ENCODE measurements at regions of chr2 and their contacts with region 1.

Region 1: DNA sequence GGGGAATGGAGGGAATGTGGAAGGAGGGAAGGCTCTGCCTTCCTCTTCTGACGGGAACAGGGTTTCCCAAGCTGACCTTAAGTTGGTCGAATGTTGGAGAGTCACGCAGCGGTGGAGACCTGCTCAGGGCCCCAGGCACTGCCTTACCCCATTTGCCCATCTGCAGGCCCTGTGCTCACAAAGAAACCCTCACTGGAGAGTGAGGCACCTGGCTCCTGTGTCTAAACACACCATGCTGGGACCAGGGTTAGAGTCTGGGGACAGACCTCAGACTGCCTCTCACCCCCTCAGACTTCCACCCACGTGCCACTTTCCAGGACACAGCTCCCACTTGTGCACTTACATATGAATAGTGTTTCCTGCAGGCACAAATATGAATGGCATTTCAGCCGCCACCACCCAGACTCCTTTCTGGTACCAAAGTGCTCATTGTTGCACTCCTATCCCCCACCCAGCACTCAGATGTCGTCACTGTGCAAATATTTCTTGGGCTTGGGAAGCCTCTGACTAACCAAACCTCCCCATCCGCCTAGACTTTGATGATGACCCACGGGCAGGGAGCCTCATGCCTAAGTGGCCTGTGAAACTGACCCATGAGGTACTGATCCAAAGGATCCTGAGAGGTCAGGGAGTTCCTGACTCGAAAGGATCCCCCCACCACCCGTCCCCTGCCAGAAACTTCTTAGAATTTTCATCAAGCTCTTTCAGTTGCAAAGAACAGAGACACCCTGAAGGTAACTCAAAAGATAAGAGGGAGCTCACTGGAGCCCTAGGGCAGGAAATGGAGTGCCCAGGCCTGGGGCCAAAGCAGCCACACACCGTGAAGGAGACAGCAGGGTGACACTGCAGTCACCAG is 78.3 kb downstream of the STPG4 start:
- DNase-seq: peak; percentile 92 to 99
- H3K4me3 ChIP-seq: peak overlapping the region; percentile 7; the same call in 1 of the 2 replicates
- H3K27ac ChIP-seq: peak overlapping the region; percentile 94
- H3K4me1 ChIP-seq: peaks cover 64% of the 10 kb centered on the region
- H3K27me3 ChIP-seq: no peaks in the 10 kb centered on the region
- CTCF ChIP-seq: no peak

Region 2: DNA sequence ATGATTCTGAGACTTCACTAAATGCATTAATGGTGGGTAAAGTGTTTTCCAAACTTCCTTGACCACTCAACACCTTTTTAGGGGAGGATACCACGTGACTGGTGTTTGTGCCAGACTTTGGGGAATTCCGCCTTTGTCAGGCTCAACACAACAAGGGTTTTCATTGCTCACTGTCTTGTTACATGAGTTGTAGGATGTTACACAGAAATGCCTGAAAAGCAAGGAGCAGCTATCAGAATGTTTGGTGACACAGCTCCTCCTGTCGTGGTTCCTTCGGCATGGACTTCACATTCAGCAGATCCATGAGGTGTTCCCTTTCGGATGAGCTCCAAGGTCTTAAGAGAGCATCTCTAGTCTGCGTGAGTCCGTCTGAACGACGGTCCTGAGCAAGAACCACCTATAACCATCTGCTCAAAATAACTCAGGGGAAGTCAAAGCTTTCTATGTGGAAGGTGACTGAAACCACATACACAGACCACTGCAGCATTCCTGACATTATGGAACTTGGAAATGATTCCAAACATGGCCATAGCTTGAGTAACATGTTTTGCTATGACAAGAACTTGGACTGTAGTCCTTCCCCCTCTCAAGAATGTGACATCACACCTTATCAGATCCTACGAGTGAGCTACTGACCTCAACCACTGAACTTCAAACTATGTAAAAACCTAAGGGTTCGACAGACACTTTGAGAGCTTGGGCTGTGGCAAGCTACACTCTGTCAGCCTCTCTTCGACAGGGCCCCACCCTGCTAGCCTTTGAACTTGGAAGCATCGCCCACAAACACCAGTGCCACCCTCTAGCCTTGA is 218.7 kb before region 1 on chr2:
- CTCF ChIA-PET with region 1: no interaction called
- POLR2A ChIA-PET with region 1: interaction called, 10 read pairs
- intact Hi-C with region 1: no loop called
- DNase-seq: peak; percentile 41 to 62
- H3K4me3 ChIP-seq: no peak overlapping the region
- H3K27ac ChIP-seq: peak overlapping the region; percentile 91
- H3K4me1 ChIP-seq: peaks cover 59% of the 10 kb centered on the region
- H3K27me3 ChIP-seq: no peaks in the 10 kb centered on the region
- CTCF ChIP-seq: no peak

Region 3: GRCh38 chr2:47043142-47043890 is 33.5 kb before region 1 on chr2:
- CTCF ChIA-PET with region 1: interaction called, 7 read pairs
- POLR2A ChIA-PET with region 1: interaction called, 10 read pairs
- intact Hi-C with region 1: loop called (anchors 1 kb)
- DNase-seq: peak; percentile 91 to 99
- H3K4me3 ChIP-seq: peak overlapping the region; percentile 45
- H3K27ac ChIP-seq: peak overlapping the region; percentile 89
- H3K4me1 ChIP-seq: peaks cover 65% of the 10 kb centered on the region
- H3K27me3 ChIP-seq: no peaks in the 10 kb centered on the region
- CTCF ChIP-seq: 0 out of 2 replicates have a peak, but pooled peaks have one; percentile 24

Region 4: DNA sequence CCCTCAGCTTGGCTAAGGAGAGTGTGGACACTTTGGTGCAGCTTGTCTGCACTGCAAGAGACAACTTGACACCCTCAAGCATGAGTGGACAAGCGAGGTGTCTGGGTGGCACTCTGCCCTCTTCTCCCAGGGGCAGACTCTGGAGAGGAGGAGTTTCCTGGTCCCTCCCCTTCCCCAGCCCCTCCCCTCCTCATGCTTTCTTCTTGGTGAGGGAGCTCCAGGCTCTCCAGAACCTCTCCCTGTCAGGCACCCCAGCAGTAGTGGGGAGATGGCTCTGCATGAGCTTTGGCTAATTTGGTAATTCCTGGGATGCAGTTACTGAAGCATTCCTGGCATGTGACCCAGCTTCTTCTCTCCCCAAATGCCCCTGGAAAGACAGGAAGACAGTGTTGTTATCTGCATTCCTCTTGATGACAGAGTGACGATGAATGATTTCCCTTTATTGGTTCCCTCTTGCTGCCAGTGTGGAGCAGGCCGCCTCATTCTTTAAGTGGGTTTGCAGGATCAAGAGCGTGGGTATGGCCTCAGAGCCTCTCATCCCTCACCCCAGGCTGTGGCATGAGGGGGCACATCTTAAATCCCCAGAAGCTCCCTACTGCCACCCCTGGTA is 10.9 kb before region 1 on chr2:
- CTCF ChIA-PET with region 1: interaction called, 14 read pairs
- POLR2A ChIA-PET with region 1: interaction called, 8 read pairs
- intact Hi-C with region 1: no loop called
- DNase-seq: peak; percentile 65 to 78
- H3K4me3 ChIP-seq: no peak overlapping the region
- H3K27ac ChIP-seq: peak overlapping the region; percentile 44
- H3K4me1 ChIP-seq: peaks cover 66% of the 10 kb centered on the region
- H3K27me3 ChIP-seq: no peaks in the 10 kb centered on the region
- CTCF ChIP-seq: no peak

Region 5: GRCh38 chr2:47165001-47165555 is 88.3 kb after region 1 on chr2:
- CTCF ChIA-PET with region 1: no interaction called
- POLR2A ChIA-PET with region 1: no interaction called
- intact Hi-C with region 1: loop called (anchors 2 kb)
- DNase-seq: peak in 1 of 2 experiments; percentile 32
- H3K4me3 ChIP-seq: no peak overlapping the region
- H3K27ac ChIP-seq: no peak overlapping the region
- H3K4me1 ChIP-seq: peaks cover 42% of the 10 kb centered on the region
- H3K27me3 ChIP-seq: no peaks in the 10 kb centered on the region
- CTCF ChIP-seq: no peak

Region 6: DNA sequence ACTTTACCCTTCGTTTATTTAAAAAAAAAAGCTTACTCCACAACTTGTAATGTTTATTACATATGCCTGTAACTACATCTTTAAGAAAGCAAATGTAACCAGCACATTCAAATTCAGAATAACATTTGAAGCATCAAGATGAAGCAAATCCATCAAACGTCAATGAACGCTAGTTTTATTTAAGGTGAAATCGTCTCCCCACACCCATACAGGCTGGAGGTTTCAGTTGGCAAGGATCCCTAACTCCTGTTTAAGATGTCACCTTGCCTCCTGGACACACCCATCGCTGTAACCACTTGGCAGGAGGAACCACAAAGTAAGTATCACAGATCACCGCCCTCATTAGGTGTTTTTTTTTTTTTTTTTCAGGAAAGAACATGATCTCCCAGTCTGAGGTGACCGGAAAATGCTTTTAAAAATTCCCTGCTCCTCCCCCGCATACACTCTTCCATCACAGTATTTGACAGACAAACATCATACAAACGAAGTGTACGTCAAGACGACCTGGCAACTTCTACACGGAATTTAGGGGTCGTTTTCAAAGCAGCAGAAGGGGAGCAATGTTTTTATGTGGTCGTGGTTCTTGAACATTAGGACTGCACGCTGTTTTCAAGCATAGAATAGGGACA is 98.0 kb after region 1 on chr2:
- CTCF ChIA-PET with region 1: no interaction called
- POLR2A ChIA-PET with region 1: interaction called, 10 read pairs
- intact Hi-C with region 1: no loop called
- DNase-seq: peak; percentile 74 to 98
- H3K4me3 ChIP-seq: peak overlapping the region; percentile 94
- H3K27ac ChIP-seq: peak overlapping the region; percentile 95
- H3K4me1 ChIP-seq: peaks cover 63% of the 10 kb centered on the region
- H3K27me3 ChIP-seq: no peaks in the 10 kb centered on the region
- CTCF ChIP-seq: no peak

Region 7: DNA sequence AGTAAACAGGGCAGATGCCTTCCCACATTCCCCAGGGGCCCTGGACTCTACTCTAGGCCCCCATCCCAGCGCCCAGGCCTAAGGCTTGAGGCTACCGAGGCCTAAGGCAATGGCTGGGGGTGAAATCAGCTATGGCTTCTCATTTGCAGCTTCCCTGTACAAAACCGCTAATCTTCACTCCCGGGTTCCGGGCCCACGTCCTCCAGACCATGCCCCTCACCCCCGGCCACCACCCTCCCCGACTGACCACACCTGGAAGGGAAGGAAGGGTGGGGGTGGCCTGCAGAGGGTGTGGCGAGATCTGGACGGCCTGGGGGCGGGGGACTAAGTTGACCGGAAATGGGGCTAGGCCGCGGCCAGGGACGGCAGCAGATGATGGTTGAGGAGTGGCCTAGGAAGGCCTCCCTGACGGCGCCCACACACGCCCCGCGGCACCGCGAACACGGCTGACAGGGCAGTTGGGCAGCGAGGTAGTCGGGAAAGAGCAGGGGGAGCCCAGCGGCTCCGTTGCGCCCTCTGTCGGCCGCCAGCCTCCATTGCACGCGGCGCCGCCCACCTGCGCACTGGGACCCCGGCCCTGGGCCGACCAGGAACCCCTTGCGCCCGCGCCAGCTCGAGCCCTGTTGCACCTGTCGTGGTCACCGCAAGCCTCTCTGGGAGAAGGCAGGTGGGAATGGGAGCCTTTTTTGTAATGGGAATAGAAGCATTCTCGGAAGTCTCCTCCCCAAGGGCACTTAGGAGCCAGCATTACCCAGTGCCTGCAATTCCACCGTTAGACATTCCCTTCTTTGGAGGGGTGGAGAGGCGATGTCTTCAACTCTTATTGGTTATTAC is 195.4 kb after region 1 on chr2:
- CTCF ChIA-PET with region 1: no interaction called
- POLR2A ChIA-PET with region 1: no interaction called
- intact Hi-C with region 1: loop called (anchors 1 kb)
- DNase-seq: peak; percentile 79 to 92
- H3K4me3 ChIP-seq: peak overlapping the region; percentile 56; the same call in 1 of the 2 replicates
- H3K27ac ChIP-seq: peak overlapping the region; percentile 99
- H3K4me1 ChIP-seq: peaks cover 62% of the 10 kb centered on the region
- H3K27me3 ChIP-seq: no peaks in the 10 kb centered on the region
- CTCF ChIP-seq: peak; percentile 100

Measured in PC-9 (cell line).